Naive thymus-derived CD4-positive, alpha-beta T cell (primary cell): ENCODE measurements at regions of chr5 and their contacts with region 1.

Region 1: DNA sequence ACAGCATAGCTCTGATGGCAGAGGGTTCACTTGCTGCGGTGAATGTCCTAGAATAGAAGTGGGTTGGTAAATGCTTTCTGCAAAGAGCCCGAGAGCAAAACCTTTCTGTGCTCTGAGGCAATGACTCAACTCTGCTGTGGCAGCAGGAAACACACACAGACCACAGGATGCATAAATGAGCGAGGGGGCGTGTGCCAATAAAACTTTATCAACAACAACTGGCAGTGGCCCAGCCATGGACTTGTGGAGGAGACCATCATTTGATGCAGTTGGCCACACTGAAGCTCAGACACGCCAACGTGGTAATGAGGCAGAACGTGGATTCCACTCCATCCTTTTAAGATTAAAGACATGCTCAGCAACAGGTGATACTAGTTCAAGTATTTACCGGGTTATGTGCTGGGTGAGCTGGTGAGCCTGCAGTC is 6.8 kb downstream of the MRPL36 start:
- DNase-seq: peak; percentile 28 to 78 (median 72)
- ATAC-seq: peak; percentile 93
- H3K4me3 ChIP-seq: peak overlapping the region; percentile 43
- H3K4me3 Mint-ChIP-seq: peak overlapping the region; percentile 48 to 91 (median 70)
- H3K27ac ChIP-seq: peak overlapping the region; percentile 56
- H3K27ac Mint-ChIP-seq: peak overlapping the region; percentile 84 to 99 (median 95)
- H3K4me1 ChIP-seq: peaks cover 21% of the 10 kb centered on the region in 2 donors
- H3K4me1 Mint-ChIP-seq: peaks cover 26 to 68% (median 48%) of the 10 kb centered on the region in 7 donors
- H3K27me3 ChIP-seq: no peaks in the 10 kb centered on the region
- H3K27me3 Mint-ChIP-seq: no peaks in the 10 kb centered on the region

Region 2: GRCh38 chr5:1111727-1112289 is 681.0 kb before region 1 on chr5 and contains the start of gene SLC12A7:
- CTCF ChIA-PET with region 1: no interaction called
- POLR2A ChIA-PET with region 1: no interaction called
- intact Hi-C with region 1: loop called in 1 of 2 experiments (anchors 2 kb)
- DNase-seq: peak; percentile 43 to 80 (median 58)
- ATAC-seq: peak; percentile 74
- H3K4me3 ChIP-seq: peak within 1 kb of the TSS; percentile 61
- H3K4me3 Mint-ChIP-seq: peak within 1 kb of the TSS; percentile 87 to 93 (median 88)
- H3K27ac ChIP-seq: peak within 1 kb of the TSS; percentile 83
- H3K27ac Mint-ChIP-seq: peak within 1 kb of the TSS; percentile 73 to 92 (median 86)
- H3K4me1 ChIP-seq: peaks cover 5 to 30% of the 10 kb centered on the region in 2 donors
- H3K4me1 Mint-ChIP-seq: peaks cover 20 to 41% (median 35%) of the 10 kb centered on the region in 7 donors
- H3K27me3 ChIP-seq: no peaks in the 10 kb centered on the region
- H3K27me3 Mint-ChIP-seq: no peaks in the 10 kb centered on the region
- total RNA-seq, gene SLC12A7: 45.3 to 101 (median 64.5) TPM

Region 3: DNA sequence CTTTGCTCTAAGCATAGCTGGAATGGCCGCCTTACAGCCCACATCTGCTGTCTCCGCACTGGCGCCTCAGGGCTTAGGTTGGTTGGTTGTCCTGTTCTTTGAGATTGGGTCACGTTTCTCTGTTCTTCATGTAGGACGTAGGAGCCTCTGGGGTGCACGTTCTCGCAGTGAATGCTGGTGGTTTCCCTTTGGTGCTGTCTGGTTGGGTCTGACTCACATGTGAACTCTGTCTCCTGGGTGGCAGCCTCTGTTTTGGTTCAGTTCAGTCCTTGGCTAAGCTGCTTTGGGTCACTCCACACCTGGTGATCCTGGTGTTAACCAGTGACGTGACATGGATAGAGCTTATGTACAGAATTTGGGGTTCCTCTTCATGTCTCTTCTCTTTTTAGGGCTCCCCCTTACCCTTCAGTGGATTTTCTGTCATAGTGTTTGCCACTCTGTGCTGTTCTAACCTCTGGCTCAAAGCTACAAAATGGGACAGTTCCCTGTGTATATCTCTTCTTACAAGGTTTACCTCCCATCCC is 256.5 kb before region 1 on chr5:
- CTCF ChIA-PET with region 1: no interaction called
- POLR2A ChIA-PET with region 1: interaction called, 4 read pairs
- intact Hi-C with region 1: loop called in 1 of 2 experiments (anchors 5 kb)
- DNase-seq: peak; percentile 25 to 72 (median 61)
- ATAC-seq: peak; percentile 97
- H3K4me3 ChIP-seq: peak overlapping the region; percentile 59
- H3K4me3 Mint-ChIP-seq: peak overlapping the region; percentile 71 to 90 (median 82)
- H3K27ac ChIP-seq: peak overlapping the region; percentile 75
- H3K27ac Mint-ChIP-seq: peak overlapping the region; percentile 81 to 94 (median 91)
- H3K4me1 ChIP-seq: peaks cover 11 to 22% of the 10 kb centered on the region in 2 donors
- H3K4me1 Mint-ChIP-seq: peaks cover 19 to 37% (median 30%) of the 10 kb centered on the region in 7 donors
- H3K27me3 ChIP-seq: no peaks in the 10 kb centered on the region
- H3K27me3 Mint-ChIP-seq: peaks cover 0 to 39% (median 0%) of the 10 kb centered on the region in 5 donors

Region 4: DNA sequence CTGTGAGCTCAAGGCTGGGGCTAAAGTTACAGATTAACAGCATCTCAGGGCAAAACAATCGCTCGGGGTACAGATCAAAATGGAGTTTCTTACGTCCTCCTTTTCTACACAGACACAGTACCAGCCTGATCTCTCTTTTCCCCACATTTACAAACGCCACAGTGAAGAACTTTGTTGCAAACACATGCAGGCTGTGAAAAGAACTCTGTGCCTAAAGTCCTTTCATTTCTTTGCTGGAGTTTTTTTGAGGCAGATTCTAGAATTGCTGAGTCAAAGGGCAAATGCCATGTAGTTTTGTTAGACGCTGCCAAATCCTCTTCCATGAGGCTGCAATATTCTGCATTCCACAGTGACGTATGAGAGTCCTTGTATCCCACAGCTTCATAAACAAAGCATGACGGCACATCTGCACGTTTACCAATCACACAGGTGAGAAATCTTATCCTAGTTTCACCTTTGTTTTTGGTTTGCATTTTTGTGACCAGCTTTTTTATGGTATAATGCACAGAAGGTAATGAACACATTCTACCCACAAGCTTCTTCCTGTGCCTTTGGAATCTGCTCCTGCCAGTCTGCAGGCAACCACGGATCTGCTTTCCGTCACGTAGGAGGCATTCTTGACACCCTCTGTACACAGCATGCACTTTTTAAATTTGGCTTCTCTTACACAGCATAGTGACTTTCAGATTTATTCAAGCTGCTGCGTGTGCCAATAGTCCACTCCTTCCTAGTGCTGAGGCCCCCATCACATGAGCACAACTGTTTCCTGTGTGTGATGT is 224.5 kb before region 1 on chr5:
- CTCF ChIA-PET with region 1: no interaction called
- POLR2A ChIA-PET with region 1: no interaction called
- intact Hi-C with region 1: no loop called
- DNase-seq: no peak
- ATAC-seq: no peak
- H3K4me3 ChIP-seq: no peak overlapping the region
- H3K4me3 Mint-ChIP-seq: no peak overlapping the region
- H3K27ac ChIP-seq: no peak overlapping the region
- H3K27ac Mint-ChIP-seq: peak overlapping the region in 3 of 9 donors; percentile 8 to 59 (median 56)
- H3K4me1 ChIP-seq: no peaks in the 10 kb centered on the region
- H3K4me1 Mint-ChIP-seq: peaks cover 0 to 7% (median 0%) of the 10 kb centered on the region in 7 donors
- H3K27me3 ChIP-seq: no peaks in the 10 kb centered on the region
- H3K27me3 Mint-ChIP-seq: no peaks in the 10 kb centered on the region

Region 5: DNA sequence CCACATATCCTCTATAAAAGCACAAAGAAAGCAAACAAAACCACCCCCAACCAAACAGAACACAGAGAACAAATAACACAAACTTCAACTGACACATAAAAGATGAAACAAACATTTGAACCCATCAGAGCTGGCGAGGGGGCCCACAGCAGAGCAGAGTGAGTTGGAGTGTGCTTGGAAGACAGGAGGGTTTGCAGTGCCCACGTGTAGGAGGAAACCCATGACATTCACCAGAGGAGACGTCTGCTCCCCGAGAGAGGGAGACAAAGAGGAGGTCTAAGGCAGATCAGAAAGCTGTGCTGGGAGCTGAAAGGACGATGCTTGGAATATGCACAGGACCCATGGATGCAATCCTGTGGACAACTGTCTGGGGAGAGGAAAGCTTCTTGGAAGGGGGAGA is 20.2 kb before region 1 on chr5:
- CTCF ChIA-PET with region 1: interaction called, 5 read pairs
- POLR2A ChIA-PET with region 1: interaction called, 5 read pairs
- intact Hi-C with region 1: loop called in 1 of 2 experiments (anchors 2 kb)
- DNase-seq: peak in 1 of 9 donors; percentile 15
- ATAC-seq: peak; percentile 42
- H3K4me3 ChIP-seq: no peak overlapping the region
- H3K4me3 Mint-ChIP-seq: no peak overlapping the region
- H3K27ac ChIP-seq: no peak overlapping the region
- H3K27ac Mint-ChIP-seq: no peak overlapping the region
- H3K4me1 ChIP-seq: no peaks in the 10 kb centered on the region
- H3K4me1 Mint-ChIP-seq: peaks cover 0 to 5% (median 0%) of the 10 kb centered on the region in 7 donors
- H3K27me3 ChIP-seq: no peaks in the 10 kb centered on the region
- H3K27me3 Mint-ChIP-seq: peaks cover 0 to 23% (median 0%) of the 10 kb centered on the region in 5 donors